CD4-positive, alpha-beta T cell (primary cell): ENCODE measurements at regions of chr16 and their contacts with region 1.

Region 1: GRCh38 chr16:8797364-8798173 is at the starts of genes PMM2 and TMEM186:
- DNase-seq: peak; percentile 87 to 98 (median 93)
- ATAC-seq: peak; percentile 96
- H3K4me3 ChIP-seq: peak within 1 kb of the TSS; percentile 98
- H3K4me3 Mint-ChIP-seq: peak within 1 kb of the TSS; percentile 98
- H3K27ac ChIP-seq: peak within 1 kb of the TSS; percentile 82 to 83
- H3K27ac Mint-ChIP-seq: peak within 1 kb of the TSS; percentile 89
- H3K4me1 ChIP-seq: peaks cover 39% of the 10 kb centered on the region
- H3K4me1 Mint-ChIP-seq: peaks cover 48% of the 10 kb centered on the region
- H3K27me3 ChIP-seq: no peaks in the 10 kb centered on the region
- H3K27me3 Mint-ChIP-seq: no peaks in the 10 kb centered on the region
- CTCF ChIP-seq: no peak
- total RNA-seq, gene PMM2: 24.2 to 27.0 TPM
- total RNA-seq, gene TMEM186: 1.9 to 3.1 TPM

Region 2: DNA sequence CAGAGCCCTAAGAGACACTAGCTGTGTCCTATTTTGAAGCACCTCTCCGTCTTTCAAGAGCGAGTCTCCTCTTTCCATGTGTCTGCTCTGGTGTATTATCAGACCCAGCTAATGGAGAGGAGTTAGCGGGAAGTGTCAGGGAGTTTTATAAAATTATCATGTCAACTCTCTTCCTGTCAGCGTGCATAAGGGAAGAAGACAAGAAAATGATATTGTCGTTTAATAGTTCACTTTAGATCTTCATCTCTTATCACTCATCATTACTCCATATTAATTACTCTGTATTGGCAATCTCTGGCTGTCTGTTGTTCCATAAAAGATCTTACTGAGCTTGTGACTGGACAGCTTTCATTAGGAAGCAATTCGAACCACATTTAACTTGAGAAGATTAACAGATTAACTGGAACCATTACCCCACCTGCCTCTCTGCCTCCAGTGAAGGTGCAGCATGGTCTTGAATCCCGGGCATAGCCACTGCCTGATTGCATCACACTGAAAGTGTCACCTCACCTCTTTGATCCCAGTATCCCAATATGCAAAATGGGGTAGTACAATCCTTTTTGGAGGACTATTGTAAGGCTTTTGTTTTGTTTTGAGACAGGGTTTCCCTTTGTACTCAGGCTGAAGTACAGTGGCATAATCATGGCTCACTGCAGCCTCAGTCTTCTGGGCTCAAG is 328.3 kb before region 1 on chr16:
- CTCF ChIA-PET with region 1: no interaction called
- POLR2A ChIA-PET with region 1: no interaction called
- intact Hi-C with region 1: no loop called
- DNase-seq: no peak
- ATAC-seq: no peak
- H3K4me3 ChIP-seq: no peak overlapping the region
- H3K4me3 Mint-ChIP-seq: no peak overlapping the region
- H3K27ac ChIP-seq: no peak overlapping the region
- H3K27ac Mint-ChIP-seq: no peak overlapping the region
- H3K4me1 ChIP-seq: no peaks in the 10 kb centered on the region
- H3K4me1 Mint-ChIP-seq: no peaks in the 10 kb centered on the region
- H3K27me3 ChIP-seq: peaks cover 0 to 5% of the 10 kb centered on the region in 2 experiments
- H3K27me3 Mint-ChIP-seq: peaks cover 12% of the 10 kb centered on the region
- CTCF ChIP-seq: no peak

Region 3: GRCh38 chr16:8621572-8622314 is 175.8 kb before region 1 on chr16 and contains the start of gene METTL22:
- CTCF ChIA-PET with region 1: no interaction called
- POLR2A ChIA-PET with region 1: no interaction called
- intact Hi-C with region 1: loop called (anchors 2 to 5 kb)
- DNase-seq: peak; percentile 83 to 97 (median 90)
- ATAC-seq: peak; percentile 98
- H3K4me3 ChIP-seq: peak within 1 kb of the TSS; percentile 100
- H3K4me3 Mint-ChIP-seq: peak within 1 kb of the TSS; percentile 94
- H3K27ac ChIP-seq: peak within 1 kb of the TSS; percentile 33 to 72
- H3K27ac Mint-ChIP-seq: peak within 1 kb of the TSS; percentile 84
- H3K4me1 ChIP-seq: peaks cover 20% of the 10 kb centered on the region
- H3K4me1 Mint-ChIP-seq: peaks cover 22% of the 10 kb centered on the region
- H3K27me3 ChIP-seq: no peaks in the 10 kb centered on the region
- H3K27me3 Mint-ChIP-seq: peaks cover 10% of the 10 kb centered on the region
- CTCF ChIP-seq: no peak
- total RNA-seq, gene METTL22: 23.2 to 26.5 TPM

Region 4: DNA sequence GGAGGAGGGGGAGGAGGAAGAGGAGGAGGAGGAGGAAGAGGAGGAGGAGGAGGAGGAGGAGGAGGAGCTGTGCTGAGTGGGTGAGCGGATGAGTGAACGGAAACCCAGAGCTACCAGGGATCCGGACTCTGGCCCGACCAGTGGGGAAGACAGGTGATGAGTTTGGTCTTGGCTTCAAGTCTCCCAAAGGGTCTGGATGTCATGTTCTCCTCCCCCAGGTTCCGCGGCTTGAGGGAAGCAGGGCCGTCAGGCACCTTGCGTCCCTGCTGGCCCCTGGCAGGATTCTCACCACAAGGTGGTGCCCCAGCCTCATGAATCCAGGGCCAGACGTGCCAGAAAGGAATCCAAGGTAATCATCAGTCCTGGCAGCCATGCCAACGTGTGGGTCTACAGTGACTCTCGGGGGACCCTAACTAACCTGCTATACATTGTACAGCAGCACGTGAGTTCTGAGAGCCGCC is 136.7 kb before region 1 on chr16:
- CTCF ChIA-PET with region 1: no interaction called
- POLR2A ChIA-PET with region 1: no interaction called
- intact Hi-C with region 1: loop called in 1 of 2 experiments (anchors 5 kb)
- DNase-seq: peak; percentile 17 to 71 (median 42)
- ATAC-seq: peak; percentile 64
- H3K4me3 ChIP-seq: no peak overlapping the region
- H3K4me3 Mint-ChIP-seq: no peak overlapping the region
- H3K27ac ChIP-seq: no peak overlapping the region
- H3K27ac Mint-ChIP-seq: no peak overlapping the region
- H3K4me1 ChIP-seq: no peaks in the 10 kb centered on the region
- H3K4me1 Mint-ChIP-seq: no peaks in the 10 kb centered on the region
- H3K27me3 ChIP-seq: no peaks in the 10 kb centered on the region
- H3K27me3 Mint-ChIP-seq: no peaks in the 10 kb centered on the region
- CTCF ChIP-seq: peak; percentile 59

Region 5: GRCh38 chr16:8674413-8675022 is 123.1 kb before region 1 on chr16 and contains the start of gene ABAT:
- CTCF ChIA-PET with region 1: no interaction called
- POLR2A ChIA-PET with region 1: no interaction called
- intact Hi-C with region 1: loop called (anchors 2 to 5 kb)
- DNase-seq: peak; percentile 78 to 93 (median 86)
- ATAC-seq: peak; percentile 96
- H3K4me3 ChIP-seq: peak within 1 kb of the TSS; percentile 92
- H3K4me3 Mint-ChIP-seq: peak within 1 kb of the TSS; percentile 97
- H3K27ac ChIP-seq: peak within 1 kb of the TSS in 1 of 2 donors; percentile 46
- H3K27ac Mint-ChIP-seq: peak within 1 kb of the TSS; percentile 91
- H3K4me1 ChIP-seq: peaks cover 25% of the 10 kb centered on the region
- H3K4me1 Mint-ChIP-seq: peaks cover 24% of the 10 kb centered on the region
- H3K27me3 ChIP-seq: no peaks in the 10 kb centered on the region
- H3K27me3 Mint-ChIP-seq: no peaks in the 10 kb centered on the region
- CTCF ChIP-seq: no peak
- total RNA-seq, gene ABAT: 4.1 to 4.4 TPM

Region 6: GRCh38 chr16:8818504-8819270 is 21.1 kb after region 1 on chr16:
- CTCF ChIA-PET with region 1: no interaction called
- POLR2A ChIA-PET with region 1: interaction called, 13 read pairs
- intact Hi-C with region 1: no loop called
- DNase-seq: no peak
- ATAC-seq: no peak
- H3K4me3 ChIP-seq: no peak overlapping the region
- H3K4me3 Mint-ChIP-seq: no peak overlapping the region
- H3K27ac ChIP-seq: no peak overlapping the region
- H3K27ac Mint-ChIP-seq: no peak overlapping the region
- H3K4me1 ChIP-seq: peaks cover 8% of the 10 kb centered on the region
- H3K4me1 Mint-ChIP-seq: peaks cover 21% of the 10 kb centered on the region
- H3K27me3 ChIP-seq: no peaks in the 10 kb centered on the region
- H3K27me3 Mint-ChIP-seq: no peaks in the 10 kb centered on the region
- CTCF ChIP-seq: no peak

Region 7: GRCh38 chr16:8868416-8869211 is 71.0 kb after region 1 on chr16 and contains the start of gene CARHSP1:
- CTCF ChIA-PET with region 1: interaction called, 3 read pairs
- POLR2A ChIA-PET with region 1: interaction called, 24 read pairs
- intact Hi-C with region 1: loop called (anchors 1 kb)
- DNase-seq: peak; percentile 62 to 92 (median 76)
- ATAC-seq: peak; percentile 74
- H3K4me3 ChIP-seq: peak within 1 kb of the TSS; percentile 85
- H3K4me3 Mint-ChIP-seq: peak within 1 kb of the TSS; percentile 95
- H3K27ac ChIP-seq: peak within 1 kb of the TSS; percentile 32 to 72
- H3K27ac Mint-ChIP-seq: peak within 1 kb of the TSS; percentile 85
- H3K4me1 ChIP-seq: peaks cover 59% of the 10 kb centered on the region
- H3K4me1 Mint-ChIP-seq: peaks cover 50% of the 10 kb centered on the region
- H3K27me3 ChIP-seq: no peaks in the 10 kb centered on the region
- H3K27me3 Mint-ChIP-seq: no peaks in the 10 kb centered on the region
- CTCF ChIP-seq: no peak
- total RNA-seq, gene CARHSP1: 25.5 to 27.8 TPM

Region 8: DNA sequence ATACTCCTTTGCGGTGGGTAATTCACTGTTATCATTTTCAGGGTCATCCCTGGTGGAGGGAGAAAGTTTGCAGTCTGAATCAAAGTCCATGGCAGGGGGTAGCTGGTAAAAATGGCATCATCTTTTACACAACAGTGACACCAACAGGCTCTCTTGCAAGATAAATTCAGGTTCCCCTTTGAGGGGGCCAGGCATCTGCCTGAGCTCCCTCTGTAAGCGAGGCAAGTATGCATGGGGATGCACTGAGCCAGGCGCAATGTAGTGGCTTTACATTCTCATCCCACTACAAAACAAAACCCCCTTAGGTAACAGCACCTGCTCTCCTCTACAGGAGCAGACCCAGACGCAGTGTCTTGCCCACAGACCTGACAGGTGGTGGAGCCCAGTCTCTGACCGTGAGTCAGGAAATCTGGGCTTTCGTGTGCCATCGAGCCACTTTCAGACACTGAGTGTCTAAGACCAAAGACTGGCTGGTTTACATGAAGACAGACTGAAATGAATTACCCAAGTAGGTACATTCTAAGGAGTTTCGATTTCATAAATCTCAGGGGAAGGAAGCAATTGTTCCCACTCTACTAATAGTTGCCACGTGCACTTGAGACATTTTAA is 102.2 kb after region 1 on chr16:
- CTCF ChIA-PET with region 1: no interaction called
- POLR2A ChIA-PET with region 1: no interaction called
- intact Hi-C with region 1: no loop called
- DNase-seq: no peak
- ATAC-seq: no peak
- H3K4me3 ChIP-seq: no peak overlapping the region
- H3K4me3 Mint-ChIP-seq: no peak overlapping the region
- H3K27ac ChIP-seq: no peak overlapping the region
- H3K27ac Mint-ChIP-seq: peak overlapping the region; percentile 15
- H3K4me1 ChIP-seq: no peaks in the 10 kb centered on the region
- H3K4me1 Mint-ChIP-seq: no peaks in the 10 kb centered on the region
- H3K27me3 ChIP-seq: no peaks in the 10 kb centered on the region
- H3K27me3 Mint-ChIP-seq: no peaks in the 10 kb centered on the region
- CTCF ChIP-seq: no peak

Region 9: DNA sequence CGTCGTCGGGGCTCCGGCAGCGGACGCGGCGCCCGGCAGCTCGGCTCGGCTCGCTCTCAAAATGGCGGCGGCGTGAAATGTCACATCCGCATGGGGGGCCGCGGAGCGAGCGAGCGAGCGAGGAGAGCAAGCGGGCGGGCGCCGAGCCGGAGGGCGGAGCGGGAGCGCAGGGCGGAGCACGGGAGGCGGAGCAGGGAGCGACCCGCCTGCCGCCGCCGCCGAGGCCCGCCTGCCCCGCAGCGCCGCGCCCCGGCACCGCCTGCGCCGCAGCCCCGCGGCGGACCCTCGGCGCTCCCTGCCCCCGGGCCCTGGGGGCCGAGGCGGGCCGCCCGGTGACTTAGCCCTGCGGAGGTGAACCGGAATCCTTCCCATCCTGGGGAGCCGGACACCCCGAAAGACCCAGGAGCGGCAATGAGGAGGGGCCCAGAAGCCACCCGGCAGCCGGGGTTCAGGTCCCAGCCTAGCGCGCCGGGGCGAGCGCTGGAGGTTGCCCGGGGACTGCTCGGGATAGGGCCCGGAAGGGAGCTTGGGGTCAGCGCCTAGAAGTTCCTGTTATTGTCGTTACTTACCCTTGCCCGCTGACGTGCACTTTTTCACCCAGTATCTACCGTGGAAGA is 166.4 kb after region 1 on chr16 and contains the start of gene USP7:
- CTCF ChIA-PET with region 1: no interaction called
- POLR2A ChIA-PET with region 1: no interaction called
- intact Hi-C with region 1: loop called in 1 of 2 experiments (anchors 2 kb)
- DNase-seq: peak; percentile 85 to 97 (median 91)
- ATAC-seq: peak; percentile 88
- H3K4me3 ChIP-seq: peak within 1 kb of the TSS; percentile 75
- H3K4me3 Mint-ChIP-seq: peak within 1 kb of the TSS; percentile 97
- H3K27ac ChIP-seq: peak within 1 kb of the TSS; percentile 64 to 81
- H3K27ac Mint-ChIP-seq: peak within 1 kb of the TSS; percentile 94
- H3K4me1 ChIP-seq: peaks cover 42% of the 10 kb centered on the region
- H3K4me1 Mint-ChIP-seq: peaks cover 47% of the 10 kb centered on the region
- H3K27me3 ChIP-seq: no peaks in the 10 kb centered on the region
- H3K27me3 Mint-ChIP-seq: no peaks in the 10 kb centered on the region
- CTCF ChIP-seq: no peak
- total RNA-seq, gene USP7: 259 to 268 TPM